Gastrocnemius medialis (tissue), 4 donors: ENCODE measurements at regions of chr17 and their contacts with region 1.

Region 1: DNA sequence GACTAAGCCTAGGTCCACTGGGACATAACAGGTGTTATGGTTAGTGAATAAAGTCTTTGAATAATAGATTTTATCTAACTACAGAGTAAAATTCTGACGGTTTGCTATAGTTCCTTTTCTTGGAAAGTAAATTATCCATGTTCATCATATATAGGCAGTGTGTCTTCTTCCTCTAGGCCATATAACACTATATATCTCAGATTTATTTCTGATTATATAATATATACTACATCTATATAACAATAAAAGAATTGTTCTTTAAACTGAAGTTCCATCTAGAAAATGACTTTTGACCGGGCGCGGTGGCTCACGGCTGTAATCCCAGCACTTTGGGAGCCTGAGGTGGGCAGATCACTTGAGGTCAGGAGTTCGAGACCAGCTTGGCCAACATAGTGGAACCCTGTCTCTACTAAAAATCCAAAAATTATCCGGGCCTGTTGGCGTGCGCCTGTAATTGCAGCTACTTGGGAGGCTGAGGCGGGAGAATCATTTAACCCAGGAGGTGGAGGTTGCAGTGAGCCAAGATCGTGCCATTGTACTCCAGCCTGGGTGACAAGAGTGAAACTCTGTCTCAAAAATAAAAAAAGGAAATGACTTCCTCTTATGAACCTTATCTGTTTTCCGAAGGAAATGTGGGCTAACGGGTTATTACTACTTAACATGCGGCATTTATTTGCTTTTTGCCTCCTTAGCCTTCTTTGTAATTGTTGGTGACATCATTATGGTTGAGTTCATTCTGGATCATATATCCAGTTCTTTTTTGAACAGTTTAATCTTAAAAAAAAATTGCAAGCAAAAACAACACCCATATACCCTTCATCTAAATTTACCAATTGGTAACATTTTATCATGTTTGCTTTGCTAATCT is 29.2 kb downstream of the NOL11 start:
- DNase-seq: no peak
- ATAC-seq: no peak
- H3K4me3 ChIP-seq: no peak overlapping the region
- H3K27ac ChIP-seq: no peak overlapping the region
- H3K4me1 ChIP-seq: no peaks in the 10 kb centered on the region
- H3K27me3 ChIP-seq: no peaks in the 10 kb centered on the region
- CTCF ChIP-seq: no peak
- POLR2A ChIP-seq: no peak

Region 2: GRCh38 chr17:67773246-67773645 is 26.3 kb after region 1 on chr17:
- in situ Hi-C with region 1: no loop called
- intact Hi-C with region 1: no loop called
- DNase-seq: no peak
- ATAC-seq: no peak
- H3K4me3 ChIP-seq: no peak overlapping the region
- H3K27ac ChIP-seq: no peak overlapping the region
- H3K4me1 ChIP-seq: no peaks in the 10 kb centered on the region
- H3K27me3 ChIP-seq: no peaks in the 10 kb centered on the region
- CTCF ChIP-seq: no peak
- POLR2A ChIP-seq: no peak

Region 3: GRCh38 chr17:67902511-67903231 is 155.7 kb after region 1 on chr17:
- in situ Hi-C with region 1: loop called in 1 of 4 experiments (anchors 25 kb)
- intact Hi-C with region 1: no loop called
- DNase-seq: no peak
- ATAC-seq: no peak
- H3K4me3 ChIP-seq: no peak overlapping the region
- H3K27ac ChIP-seq: no peak overlapping the region
- H3K4me1 ChIP-seq: no peaks in the 10 kb centered on the region
- H3K27me3 ChIP-seq: no peaks in the 10 kb centered on the region
- CTCF ChIP-seq: no peak
- POLR2A ChIP-seq: no peak